Activated T-helper 2 cell treated with anti-CD3 and anti-CD28 coated beads, Interferon-gamma antibody, Interleukin-2, Interleukin-4, amounts not matched to agents 10 μg/mL and 5 μg/mL and 100 μg/mL, durations not matched to agents 14 hours and 24 hours and 36 hours (primary cell): ENCODE measurements at regions of chr13 and their contacts with region 1.

Region 1: GRCh38 chr13:40777166-40777808 is 6.3 kb upstream of the MRPS31 start:
- DNase-seq: peak; percentile 36
- H3K4me3 Mint-ChIP-seq: peak overlapping the region; percentile 72
- H3K27ac Mint-ChIP-seq: peak overlapping the region; percentile 99
- H3K4me1 Mint-ChIP-seq: peaks cover 35% of the 10 kb centered on the region
- H3K27me3 Mint-ChIP-seq: no peaks in the 10 kb centered on the region

Region 2: DNA sequence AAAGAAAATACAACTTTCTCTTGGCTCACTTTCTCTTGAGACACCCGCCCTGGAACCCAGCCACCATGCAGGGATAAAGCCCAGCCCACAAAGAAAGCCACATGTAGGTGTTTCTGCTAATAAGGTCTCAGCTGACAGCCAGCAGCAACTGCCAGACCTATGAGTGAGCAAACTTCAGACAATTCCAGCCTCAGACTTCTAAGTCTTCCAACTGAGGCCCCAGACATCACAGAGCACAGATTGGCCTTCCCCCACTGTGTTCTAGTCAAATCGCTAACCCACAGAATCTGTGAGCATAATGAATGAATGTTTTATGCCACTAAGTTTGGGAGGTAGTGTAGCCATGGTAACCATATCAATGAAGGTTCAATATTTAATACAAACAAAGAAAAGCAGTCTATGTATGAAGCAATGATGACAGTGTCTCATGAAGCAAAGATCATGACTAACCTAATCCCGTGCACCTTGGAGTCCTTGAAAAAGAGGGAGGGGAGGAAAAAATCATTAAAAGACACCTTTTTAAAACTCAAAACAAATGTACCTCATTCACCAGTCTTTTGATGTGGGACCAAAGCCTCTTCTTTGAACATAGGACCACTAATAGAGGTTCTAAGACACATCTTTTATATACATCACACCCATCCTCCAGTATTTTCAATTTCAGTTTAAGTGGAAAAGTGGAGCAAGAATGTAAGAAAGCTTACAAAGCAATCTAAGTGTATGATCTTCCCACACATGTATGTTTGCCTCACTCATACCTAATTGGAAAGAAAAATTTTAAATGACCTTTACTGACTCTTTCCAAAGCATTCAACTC is 12.5 kb before region 1 on chr13:
- intact Hi-C with region 1: loop called (anchors 1 kb)
- DNase-seq: no peak
- H3K4me3 Mint-ChIP-seq: peak overlapping the region; percentile 5
- H3K27ac Mint-ChIP-seq: peak overlapping the region; percentile 82
- H3K4me1 Mint-ChIP-seq: peaks cover 45% of the 10 kb centered on the region
- H3K27me3 Mint-ChIP-seq: no peaks in the 10 kb centered on the region

Region 3: DNA sequence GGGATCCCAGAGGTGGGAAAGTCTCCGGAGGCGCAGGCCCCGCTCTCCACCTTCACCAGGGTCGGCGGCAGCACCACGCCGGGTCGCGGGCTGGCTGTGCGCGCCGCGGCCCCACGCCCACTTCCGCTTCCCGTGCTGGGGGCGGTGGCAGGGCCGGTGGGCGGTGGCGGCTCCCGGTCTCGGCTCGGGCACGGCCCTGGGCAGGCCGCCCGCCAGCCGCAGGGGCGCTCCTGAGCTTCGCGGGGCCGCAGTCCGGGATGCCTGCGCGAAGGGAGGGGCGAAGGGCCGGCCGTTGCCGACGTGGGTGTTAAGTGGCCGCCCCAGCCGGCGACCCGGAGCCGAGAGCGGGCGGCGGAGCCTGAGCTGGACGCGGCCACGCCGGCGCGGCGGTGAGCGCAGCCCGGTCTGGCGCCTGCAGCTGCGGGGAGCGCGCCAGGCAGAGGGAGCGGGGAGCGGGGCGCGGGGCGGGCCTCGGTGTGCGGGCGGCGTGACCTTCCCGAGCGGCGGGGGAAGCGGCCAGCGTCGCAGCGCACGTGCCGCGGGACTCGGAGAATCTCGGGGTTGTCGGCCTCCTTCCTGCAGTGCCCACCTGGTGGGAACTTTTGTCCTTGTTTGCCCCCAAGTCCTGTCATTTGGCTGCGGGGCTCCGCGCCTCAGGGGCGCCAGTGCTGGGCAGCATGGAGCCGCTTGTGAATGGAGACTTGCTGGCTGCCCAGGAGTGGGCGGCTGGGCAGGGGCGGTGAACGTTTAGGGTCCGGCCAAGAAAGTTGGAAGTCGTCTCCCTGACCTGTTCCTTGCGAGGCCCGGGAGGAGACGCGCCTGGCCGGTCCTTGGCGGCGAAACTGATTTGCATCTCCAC is 12.2 kb after region 1 on chr13 and contains the start of gene SLC25A15:
- intact Hi-C with region 1: loop called (anchors 1 kb)
- DNase-seq: peak; percentile 62
- H3K4me3 Mint-ChIP-seq: peak within 1 kb of the TSS; percentile 73
- H3K27ac Mint-ChIP-seq: peak within 1 kb of the TSS; percentile 76
- H3K4me1 Mint-ChIP-seq: peaks cover 36% of the 10 kb centered on the region
- H3K27me3 Mint-ChIP-seq: no peaks in the 10 kb centered on the region
- total RNA-seq, gene SLC25A15: 21.8 and 24.1 TPM in 2 replicates

Region 4: GRCh38 chr13:40801255-40802217 is 24.2 kb after region 1 on chr13:
- intact Hi-C with region 1: no loop called
- DNase-seq: no peak
- H3K4me3 Mint-ChIP-seq: no peak overlapping the region
- H3K27ac Mint-ChIP-seq: no peak overlapping the region
- H3K4me1 Mint-ChIP-seq: peaks cover 4% of the 10 kb centered on the region
- H3K27me3 Mint-ChIP-seq: no peaks in the 10 kb centered on the region

Region 5: DNA sequence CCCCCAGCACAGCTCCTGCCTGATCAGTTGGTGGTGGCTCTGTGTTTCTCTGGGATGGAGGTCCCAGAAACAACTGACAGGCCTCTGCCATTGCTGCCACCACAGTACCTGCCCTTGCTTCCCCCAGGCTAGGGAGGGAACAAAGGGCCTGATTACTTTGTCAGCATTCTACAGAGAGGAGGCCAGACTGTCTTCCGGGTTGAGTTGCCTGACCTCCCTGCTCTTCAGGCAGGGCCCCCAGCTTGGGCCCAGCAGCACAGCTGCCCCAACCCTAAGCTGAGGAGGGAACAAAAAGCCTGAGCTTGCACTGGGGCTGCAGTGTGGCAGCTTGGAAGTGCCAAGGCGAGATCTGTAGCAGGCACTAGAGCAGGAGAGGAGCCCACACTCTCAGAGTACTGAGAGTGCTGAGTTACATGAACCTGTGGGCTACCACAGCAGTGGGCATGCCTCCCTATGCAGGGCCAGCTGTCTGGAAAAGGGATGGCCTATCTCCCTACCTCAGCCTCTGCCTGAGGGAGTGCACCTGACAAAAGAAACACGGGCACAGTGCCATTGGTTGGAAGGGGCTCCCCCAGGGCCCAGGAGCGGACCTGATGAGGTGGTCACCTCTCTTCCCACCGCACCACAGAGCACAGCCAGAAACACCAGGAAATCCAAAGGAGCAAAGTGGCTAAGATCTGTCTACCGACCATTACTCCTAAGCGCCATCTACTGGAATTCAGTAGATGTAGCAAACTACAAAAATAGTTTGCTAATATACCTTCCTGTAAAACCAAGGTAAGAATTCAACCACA is 36.6 kb after region 1 on chr13:
- intact Hi-C with region 1: loop called (anchors 1 kb)
- DNase-seq: no peak
- H3K4me3 Mint-ChIP-seq: no peak overlapping the region
- H3K27ac Mint-ChIP-seq: no peak overlapping the region
- H3K4me1 Mint-ChIP-seq: peaks cover 1% of the 10 kb centered on the region
- H3K27me3 Mint-ChIP-seq: no peaks in the 10 kb centered on the region

Region 6: DNA sequence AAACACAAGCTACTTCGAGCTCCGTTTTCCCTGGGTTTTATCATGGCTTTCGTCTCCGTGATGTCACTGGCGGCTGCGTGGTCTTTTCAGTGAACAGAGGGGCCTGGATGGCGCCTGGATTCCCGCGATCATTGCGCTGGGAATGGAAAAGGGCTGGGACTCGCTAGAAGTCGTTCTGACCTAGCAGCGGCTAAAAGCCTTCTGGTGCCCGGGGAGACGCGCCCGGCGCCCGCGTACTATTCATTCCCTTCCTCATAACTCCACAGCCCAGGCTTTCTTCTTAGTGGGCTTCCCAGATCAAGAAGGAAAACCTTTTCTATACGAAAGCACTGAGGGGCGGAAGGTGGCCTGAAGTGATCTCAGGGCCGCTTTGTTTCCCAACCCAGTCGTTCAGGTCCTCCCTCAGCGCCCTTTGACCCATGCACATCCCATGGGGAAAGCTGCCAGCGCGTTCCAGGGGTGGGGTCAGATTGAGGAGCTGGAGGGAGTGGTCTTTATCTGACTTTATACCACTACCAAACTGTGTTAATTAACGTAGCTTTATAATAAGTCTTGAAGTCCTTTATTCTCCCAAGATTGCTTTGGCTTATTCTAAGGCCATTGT is 145.3 kb after region 1 on chr13:
- intact Hi-C with region 1: loop called (anchors 2 kb)
- DNase-seq: no peak
- H3K4me3 Mint-ChIP-seq: peak overlapping the region; percentile 70
- H3K27ac Mint-ChIP-seq: peak overlapping the region; percentile 68
- H3K4me1 Mint-ChIP-seq: peaks cover 9% of the 10 kb centered on the region
- H3K27me3 Mint-ChIP-seq: no peaks in the 10 kb centered on the region

Region 7: DNA sequence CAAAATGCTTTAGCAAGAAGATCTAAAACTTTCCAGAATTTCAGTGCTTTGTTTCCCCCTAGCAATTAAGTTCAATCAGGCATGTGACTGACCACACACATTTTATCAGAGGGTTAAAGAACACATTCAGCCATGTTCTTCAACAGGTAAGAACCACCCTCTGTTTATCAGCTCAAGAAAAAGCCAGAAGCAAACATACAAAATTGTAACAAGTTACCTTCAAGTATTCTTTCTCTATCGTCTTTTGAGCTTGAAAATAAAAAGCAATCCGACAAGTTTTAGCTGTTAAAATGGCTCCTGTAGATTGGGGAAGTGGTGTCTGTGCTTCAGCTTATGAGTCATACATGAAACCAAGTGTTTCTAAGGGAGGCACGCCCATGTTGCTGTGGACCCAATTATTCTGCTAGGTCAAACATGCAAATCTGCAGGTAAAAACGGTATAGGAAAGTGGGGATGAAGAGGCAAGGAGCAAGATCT is 241.8 kb after region 1 on chr13 and contains the start of gene ELF1:
- intact Hi-C with region 1: loop called (anchors 5 kb)
- DNase-seq: peak; percentile 51
- H3K4me3 Mint-ChIP-seq: peak within 1 kb of the TSS; percentile 91
- H3K27ac Mint-ChIP-seq: peak within 1 kb of the TSS; percentile 97
- H3K4me1 Mint-ChIP-seq: peaks cover 38% of the 10 kb centered on the region
- H3K27me3 Mint-ChIP-seq: no peaks in the 10 kb centered on the region
- total RNA-seq, gene ELF1: 65.3 and 68.1 TPM in 2 replicates